ENCODE measurements at regions of chr2 and their contacts with region 1.

Region 1: GRCh38 chr2:37648331-37649011 is 23.0 kb downstream of the CDC42EP3 start:
- DNase-seq: no peak
- ATAC-seq: no peak
- H3K4me3 ChIP-seq: no peak overlapping the region
- H3K27ac ChIP-seq: peak overlapping the region; percentile 64
- H3K4me1 ChIP-seq: peaks cover 52% of the 10 kb centered on the region
- H3K27me3 ChIP-seq: no peaks in the 10 kb centered on the region
- CTCF ChIP-seq: peak in 1 of 3 experiments; percentile 24; a peak in 2 of 6 replicates
- EP300 ChIP-seq: no peak
- POLR2A ChIP-seq: 0 out of 2 replicates have a peak, but pooled peaks have one; percentile 16
- RAD21 ChIP-seq: 0 out of 2 replicates have a peak, but pooled peaks have one; percentile 20

Region 2: GRCh38 chr2:37324786-37325624 is 323.5 kb before region 1 on chr2 and contains the start of gene PRKD3:
- CTCF ChIA-PET with region 1: no interaction called
- POLR2A ChIA-PET with region 1: no interaction called
- RAD21 ChIA-PET with region 1: no interaction called
- SMC1A ChIA-PET with region 1: no interaction called
- in situ Hi-C with region 1: no loop called
- intact Hi-C with region 1: no loop called
- DNase-seq: no peak
- ATAC-seq: peak; percentile 79
- H3K4me3 ChIP-seq: peak within 1 kb of the TSS; percentile 69
- H3K27ac ChIP-seq: peak within 1 kb of the TSS; percentile 35
- H3K4me1 ChIP-seq: peaks cover 3% of the 10 kb centered on the region; the same call in 1 of the 2 replicates
- H3K27me3 ChIP-seq: peaks cover 2 to 6% of the 10 kb centered on the region in 2 experiments
- CTCF ChIP-seq: no peak
- EP300 ChIP-seq: no peak
- POLR2A ChIP-seq: no peak
- RAD21 ChIP-seq: no peak
- polyA plus RNA-seq, gene PRKD3: 3.3 to 3.7 TPM

Region 3: DNA sequence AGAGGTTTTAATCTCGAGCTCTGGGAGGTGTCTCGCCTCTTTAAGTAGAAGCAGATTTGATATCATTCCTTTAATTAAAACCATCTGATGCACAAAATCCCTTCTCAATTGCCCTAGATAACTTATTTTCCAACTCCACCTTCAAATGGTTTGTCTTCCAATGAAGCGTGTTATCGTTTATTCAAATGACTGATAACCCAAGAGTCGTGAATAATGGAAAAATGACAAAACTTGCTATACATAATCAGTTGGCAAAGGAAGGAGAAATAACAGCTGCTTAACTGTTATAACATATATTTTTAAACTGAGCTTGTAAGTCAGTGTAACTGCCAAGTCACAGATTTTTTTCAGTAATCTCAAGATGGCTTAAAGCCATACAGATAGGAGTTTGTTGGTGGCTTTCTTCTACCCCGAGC is 159.4 kb before region 1 on chr2:
- CTCF ChIA-PET with region 1: no interaction called
- POLR2A ChIA-PET with region 1: interaction called, 11 read pairs
- RAD21 ChIA-PET with region 1: no interaction called
- SMC1A ChIA-PET with region 1: no interaction called
- in situ Hi-C with region 1: no loop called
- intact Hi-C with region 1: no loop called
- DNase-seq: no peak
- ATAC-seq: no peak
- H3K4me3 ChIP-seq: no peak overlapping the region
- H3K27ac ChIP-seq: no peak overlapping the region
- H3K4me1 ChIP-seq: no peaks in the 10 kb centered on the region
- H3K27me3 ChIP-seq: no peaks in the 10 kb centered on the region
- CTCF ChIP-seq: no peak
- EP300 ChIP-seq: no peak
- POLR2A ChIP-seq: no peak
- RAD21 ChIP-seq: no peak

Region 4: DNA sequence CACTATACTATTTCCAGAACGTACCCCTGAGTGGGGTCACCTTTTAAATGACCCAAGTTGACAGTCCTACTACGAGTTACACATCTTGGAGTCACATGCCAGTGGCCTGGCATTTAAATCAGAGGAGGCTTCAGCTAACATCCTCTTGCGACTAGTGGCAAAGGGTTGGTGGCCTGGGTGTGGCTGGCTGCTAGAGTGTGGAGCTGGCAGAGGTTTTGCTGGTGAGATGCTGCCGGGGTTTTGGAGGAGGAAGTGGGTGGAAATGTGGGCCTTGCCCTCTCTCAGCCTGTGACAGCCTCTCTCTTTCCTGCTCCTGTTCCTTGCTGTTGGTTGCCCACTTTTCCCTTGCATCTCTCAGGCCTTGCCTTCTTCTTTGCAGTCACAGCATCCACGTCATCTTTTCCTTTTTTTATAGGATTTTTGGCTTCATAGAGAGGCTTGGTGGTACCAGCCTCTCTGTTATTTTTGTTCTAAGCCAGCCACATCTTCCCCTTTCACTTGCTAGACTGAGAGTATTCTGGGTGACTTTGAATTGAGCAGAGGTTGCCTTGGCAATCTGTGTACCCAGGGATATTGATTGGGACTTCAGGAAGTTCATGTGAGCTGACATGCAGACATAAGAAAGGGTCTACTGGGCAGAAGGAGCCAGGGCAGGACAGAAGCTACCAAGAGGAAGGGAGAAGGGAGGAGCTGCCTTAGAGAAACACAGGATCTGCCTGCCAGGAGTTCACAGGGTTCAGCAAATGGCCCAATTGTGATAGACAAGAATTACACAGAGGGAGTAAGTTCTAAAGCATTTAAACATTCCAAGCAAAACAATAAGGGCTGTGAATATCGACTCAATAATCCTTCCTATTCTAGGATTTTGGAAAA is 32.4 kb before region 1 on chr2:
- CTCF ChIA-PET with region 1: interaction called, 8 read pairs
- POLR2A ChIA-PET with region 1: interaction called, 166 read pairs
- RAD21 ChIA-PET with region 1: interaction called, 176 read pairs
- SMC1A ChIA-PET with region 1: interaction called, 147 read pairs
- in situ Hi-C with region 1: no loop called
- intact Hi-C with region 1: no loop called
- DNase-seq: no peak
- ATAC-seq: peak; percentile 58
- H3K4me3 ChIP-seq: no peak overlapping the region
- H3K27ac ChIP-seq: peak overlapping the region; percentile 72
- H3K4me1 ChIP-seq: peaks cover 17% of the 10 kb centered on the region
- H3K27me3 ChIP-seq: no peaks in the 10 kb centered on the region
- CTCF ChIP-seq: no peak
- EP300 ChIP-seq: no peak
- POLR2A ChIP-seq: no peak
- RAD21 ChIP-seq: no peak

Region 5: DNA sequence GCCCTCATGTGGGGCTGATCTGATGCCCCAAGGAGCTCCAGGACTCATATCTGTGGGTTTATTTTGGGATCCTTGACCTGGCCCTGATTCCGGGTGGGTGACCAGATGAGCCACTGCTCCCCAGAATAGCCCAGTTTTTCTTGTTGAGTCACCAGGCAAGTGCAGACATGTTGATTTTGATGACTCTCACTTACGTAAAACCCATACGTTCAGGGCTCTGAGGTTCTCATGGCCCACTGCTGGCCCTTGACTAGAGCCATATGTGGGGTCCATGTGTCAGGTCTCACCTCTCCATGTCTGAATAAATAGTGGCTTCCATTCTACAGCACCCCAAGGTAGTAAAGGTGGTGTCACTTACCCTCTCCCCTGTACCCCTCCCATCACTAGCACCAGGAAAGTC is 18.9 kb before region 1 on chr2:
- CTCF ChIA-PET with region 1: interaction called, 7 read pairs
- POLR2A ChIA-PET with region 1: interaction called, 166 read pairs
- RAD21 ChIA-PET with region 1: interaction called, 176 read pairs
- SMC1A ChIA-PET with region 1: interaction called, 147 read pairs
- in situ Hi-C with region 1: no loop called
- intact Hi-C with region 1: no loop called
- DNase-seq: no peak
- ATAC-seq: peak; percentile 32
- H3K4me3 ChIP-seq: no peak overlapping the region
- H3K27ac ChIP-seq: peak overlapping the region; percentile 76
- H3K4me1 ChIP-seq: peaks cover 47% of the 10 kb centered on the region
- H3K27me3 ChIP-seq: no peaks in the 10 kb centered on the region
- CTCF ChIP-seq: no peak
- EP300 ChIP-seq: peak; percentile 35 to 41; a peak in 1 of 4 replicates
- POLR2A ChIP-seq: no peak
- RAD21 ChIP-seq: no peak; the same call in 1 of the 2 replicates

Region 6: DNA sequence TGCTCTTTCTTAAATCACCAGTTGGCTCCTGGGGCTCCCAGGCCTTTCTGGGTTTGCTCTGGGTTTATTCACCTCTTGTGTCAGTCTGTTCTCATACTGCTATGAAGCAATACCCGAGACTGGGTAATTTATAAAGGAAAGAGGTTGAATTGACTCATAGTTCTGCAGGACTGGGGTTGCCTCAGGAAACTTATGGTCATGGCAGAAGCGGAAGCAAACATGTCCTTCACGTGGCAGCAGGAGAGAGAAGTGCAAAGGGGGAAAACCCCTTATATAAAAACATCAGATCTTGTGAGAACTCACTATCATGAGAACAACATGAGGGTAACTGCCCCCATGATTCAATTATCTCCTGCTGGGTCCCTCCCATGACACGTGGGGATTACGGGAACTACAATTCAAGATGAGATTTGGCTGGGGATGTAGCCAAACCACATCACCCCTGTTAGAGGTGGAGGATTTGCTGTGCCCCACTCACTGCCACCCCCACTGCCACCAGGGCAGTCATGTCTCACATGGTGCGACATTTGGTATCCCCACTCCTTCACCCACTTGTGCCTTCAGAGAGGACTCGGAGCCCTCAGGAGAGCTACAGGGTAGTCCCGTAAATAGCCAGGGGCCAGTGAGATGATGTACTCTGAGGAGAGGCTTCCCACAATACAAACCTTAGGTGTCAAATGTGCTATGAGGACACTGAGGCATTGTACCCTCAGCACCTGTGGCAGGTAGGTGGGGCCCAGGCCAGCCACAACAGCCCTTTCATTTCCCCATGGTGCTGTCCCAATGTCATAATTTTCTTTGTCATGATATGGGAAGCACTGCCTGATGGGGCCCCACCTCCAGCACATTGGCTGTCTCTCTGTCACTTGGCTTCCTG is 12.7 kb before region 1 on chr2:
- CTCF ChIA-PET with region 1: interaction called, 7 read pairs
- POLR2A ChIA-PET with region 1: interaction called, 45 read pairs
- RAD21 ChIA-PET with region 1: interaction called, 40 read pairs
- SMC1A ChIA-PET with region 1: interaction called, 35 read pairs
- in situ Hi-C with region 1: no loop called
- intact Hi-C with region 1: loop called (anchors 1 kb)
- DNase-seq: peak; percentile 92
- ATAC-seq: peak; percentile 80
- H3K4me3 ChIP-seq: no peak overlapping the region
- H3K27ac ChIP-seq: peak overlapping the region; percentile 91
- H3K4me1 ChIP-seq: peaks cover 26% of the 10 kb centered on the region
- H3K27me3 ChIP-seq: no peaks in the 10 kb centered on the region
- CTCF ChIP-seq: no peak
- EP300 ChIP-seq: peak; percentile 27 to 69; a peak in 3 of 4 replicates
- POLR2A ChIP-seq: peak; percentile 14
- RAD21 ChIP-seq: peak; percentile 37; the same call in 1 of the 2 replicates

Region 7: GRCh38 chr2:37672104-37672869 is 23.8 kb after region 1 on chr2:
- CTCF ChIA-PET with region 1: interaction called, 9 read pairs
- POLR2A ChIA-PET with region 1: interaction called, 171 read pairs
- RAD21 ChIA-PET with region 1: interaction called, 127 read pairs
- SMC1A ChIA-PET with region 1: interaction called, 246 read pairs
- in situ Hi-C with region 1: no loop called
- intact Hi-C with region 1: no loop called
- DNase-seq: no peak
- ATAC-seq: peak; percentile 58
- H3K4me3 ChIP-seq: peak overlapping the region; percentile 87
- H3K27ac ChIP-seq: peak overlapping the region; percentile 77
- H3K4me1 ChIP-seq: no peaks in the 10 kb centered on the region; the same call in 1 of the 2 replicates
- H3K27me3 ChIP-seq: no peaks in the 10 kb centered on the region
- CTCF ChIP-seq: no peak
- EP300 ChIP-seq: no peak
- POLR2A ChIP-seq: peak; percentile 51; the same call in 1 of the 2 replicates
- RAD21 ChIP-seq: no peak

Region 8: GRCh38 chr2:37688771-37689468 is 40.4 kb after region 1 on chr2:
- CTCF ChIA-PET with region 1: no interaction called
- POLR2A ChIA-PET with region 1: no interaction called
- RAD21 ChIA-PET with region 1: no interaction called
- SMC1A ChIA-PET with region 1: no interaction called
- in situ Hi-C with region 1: no loop called
- intact Hi-C with region 1: no loop called
- DNase-seq: no peak
- ATAC-seq: no peak
- H3K4me3 ChIP-seq: no peak overlapping the region
- H3K27ac ChIP-seq: no peak overlapping the region
- H3K4me1 ChIP-seq: no peaks in the 10 kb centered on the region
- H3K27me3 ChIP-seq: no peaks in the 10 kb centered on the region
- CTCF ChIP-seq: no peak
- EP300 ChIP-seq: no peak
- POLR2A ChIP-seq: no peak
- RAD21 ChIP-seq: no peak

Region 9: DNA sequence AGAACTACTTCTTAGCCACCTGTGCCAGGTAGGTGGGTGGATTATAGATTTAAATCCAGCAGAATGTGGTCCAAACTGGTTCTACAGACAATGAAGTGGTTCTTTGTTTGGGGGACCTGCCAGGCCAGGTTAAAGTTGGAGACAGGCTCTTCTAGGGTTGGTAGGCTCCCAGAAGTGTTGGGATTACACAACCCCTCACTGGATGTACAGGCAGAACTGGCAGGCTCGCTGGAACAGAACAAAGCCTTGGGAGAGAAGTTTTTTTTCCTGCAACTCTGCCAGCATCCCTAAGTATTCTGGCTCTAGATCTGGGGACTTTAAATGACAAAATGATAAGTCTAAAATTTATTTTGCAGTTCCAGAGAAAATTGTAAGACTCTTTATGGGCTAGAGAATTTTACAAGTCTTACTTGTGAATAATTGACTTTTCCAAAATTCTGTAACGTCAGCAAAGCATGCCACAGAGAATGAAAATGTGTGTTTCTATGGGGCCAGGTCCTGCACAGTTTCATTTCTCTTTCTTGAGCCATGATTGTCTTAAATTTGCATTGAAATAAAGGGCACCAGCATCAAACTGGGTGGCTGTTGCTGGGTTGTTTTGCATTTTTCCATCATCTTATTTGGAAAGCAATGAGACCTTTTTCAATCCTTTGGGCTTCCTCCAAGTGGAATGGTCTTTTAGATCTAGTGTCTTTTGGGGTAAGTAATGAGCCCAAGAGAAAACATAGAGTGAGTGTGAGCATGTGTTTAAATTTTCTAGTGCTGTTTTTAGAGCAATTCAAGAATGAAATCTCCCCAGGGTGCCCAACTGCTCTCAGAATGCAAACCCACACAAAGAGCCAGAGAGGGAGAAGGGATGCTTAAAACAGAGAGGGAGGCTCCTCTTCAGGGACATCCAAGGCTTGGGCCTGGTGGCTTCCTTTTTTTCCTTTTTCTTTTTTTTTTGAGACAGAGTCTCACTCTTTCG is 761.0 kb after region 1 on chr2:
- CTCF ChIA-PET with region 1: no interaction called
- POLR2A ChIA-PET with region 1: no interaction called
- RAD21 ChIA-PET with region 1: no interaction called
- SMC1A ChIA-PET with region 1: no interaction called
- in situ Hi-C with region 1: no loop called
- intact Hi-C with region 1: no loop called
- DNase-seq: peak; percentile 59
- ATAC-seq: peak; percentile 90
- H3K4me3 ChIP-seq: peak overlapping the region; percentile 22
- H3K27ac ChIP-seq: peak overlapping the region; percentile 68
- H3K4me1 ChIP-seq: peaks cover 38% of the 10 kb centered on the region
- H3K27me3 ChIP-seq: no peaks in the 10 kb centered on the region
- CTCF ChIP-seq: no peak
- EP300 ChIP-seq: 0 out of 4 replicates have a peak, but pooled peaks of 1 of the 2 experiments have one; percentile 47
- POLR2A ChIP-seq: no peak
- RAD21 ChIP-seq: no peak